PC-3 (cell line): ENCODE measurements at regions of chr1 and their contacts with region 1.

Region 1: GRCh38 chr1:222465211-222466041 is 82.5 kb downstream of the HHIPL2 start:
- DNase-seq: peak; percentile 100
- ATAC-seq: peak; percentile 99
- H3K4me3 ChIP-seq: peak overlapping the region; percentile 70
- H3K27ac ChIP-seq: peak overlapping the region; percentile 83
- H3K4me1 ChIP-seq: peaks cover 7% of the 10 kb centered on the region; the same call in 1 of the 2 replicates
- H3K27me3 ChIP-seq: no peaks in the 10 kb centered on the region
- CTCF ChIP-seq: peak; percentile 100

Region 2: GRCh38 chr1:222171005-222171404 is 294.4 kb before region 1 on chr1:
- CTCF ChIA-PET with region 1: interaction called, 10 read pairs
- POLR2A ChIA-PET with region 1: no interaction called
- intact Hi-C with region 1: no loop called
- DNase-seq: peak; percentile 77
- ATAC-seq: peak; percentile 71
- H3K4me3 ChIP-seq: no peak overlapping the region
- H3K27ac ChIP-seq: no peak overlapping the region
- H3K4me1 ChIP-seq: no peaks in the 10 kb centered on the region
- H3K27me3 ChIP-seq: no peaks in the 10 kb centered on the region
- CTCF ChIP-seq: peak; percentile 90

Region 3: DNA sequence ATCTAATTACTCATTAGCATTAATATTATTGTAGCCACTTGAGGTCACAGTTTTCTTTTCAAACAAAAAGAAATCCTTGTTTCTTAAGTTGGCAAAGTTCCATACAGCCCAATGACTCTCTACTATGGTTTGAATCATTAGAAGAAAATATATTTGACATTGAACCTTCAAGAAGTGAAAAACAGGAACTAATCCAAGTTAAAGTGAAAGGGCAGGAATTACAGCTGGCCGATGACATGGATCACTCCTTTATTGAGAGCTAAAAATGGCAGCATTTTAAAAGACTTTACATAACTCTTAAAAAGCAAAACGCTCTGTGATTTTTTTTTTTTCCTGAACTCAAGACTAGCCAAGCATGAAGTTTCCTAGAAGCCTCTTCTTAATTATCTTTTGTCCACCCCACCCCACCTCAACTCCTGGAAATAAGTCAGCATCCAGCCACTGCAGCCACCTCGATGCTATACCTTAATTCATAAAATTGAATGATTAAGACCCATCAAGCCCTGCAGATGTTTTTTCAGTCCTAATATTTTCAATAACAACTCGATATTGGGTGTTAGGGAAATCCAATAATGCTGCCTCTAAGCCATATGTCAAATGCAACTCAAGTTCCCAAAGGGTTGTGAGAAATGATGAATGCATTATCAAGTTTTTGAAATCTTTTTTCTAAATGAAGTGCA is 240.7 kb before region 1 on chr1:
- CTCF ChIA-PET with region 1: no interaction called
- POLR2A ChIA-PET with region 1: no interaction called
- intact Hi-C with region 1: no loop called
- DNase-seq: peak; percentile 21
- ATAC-seq: no peak
- H3K4me3 ChIP-seq: no peak overlapping the region
- H3K27ac ChIP-seq: no peak overlapping the region
- H3K4me1 ChIP-seq: peaks cover 14% of the 10 kb centered on the region
- H3K27me3 ChIP-seq: 0 out of 2 replicates have a peak, but pooled peaks cover under 1% of the 10 kb centered on the region
- CTCF ChIP-seq: no peak

Region 4: DNA sequence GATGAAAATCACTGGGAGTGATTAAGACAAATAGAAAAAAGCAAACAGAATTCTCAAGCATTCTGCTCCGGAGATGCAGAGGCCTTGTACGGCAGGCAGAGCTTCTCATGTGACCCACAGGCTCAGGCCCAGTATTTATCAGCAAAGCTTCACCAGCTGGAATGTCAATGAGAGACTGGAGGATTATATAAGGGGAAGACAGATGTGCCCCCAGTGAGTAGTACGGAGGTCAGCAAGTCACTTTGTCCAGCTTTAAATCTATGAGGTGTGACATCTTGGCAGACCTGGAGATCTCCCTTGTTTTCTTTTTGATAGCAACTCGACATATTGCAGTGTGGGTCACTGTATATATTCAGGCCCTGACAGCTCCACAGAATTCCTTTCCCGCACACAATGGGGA is 24.4 kb before region 1 on chr1:
- CTCF ChIA-PET with region 1: no interaction called
- POLR2A ChIA-PET with region 1: no interaction called
- intact Hi-C with region 1: no loop called
- DNase-seq: no peak
- ATAC-seq: no peak
- H3K4me3 ChIP-seq: no peak overlapping the region
- H3K27ac ChIP-seq: no peak overlapping the region
- H3K4me1 ChIP-seq: no peaks in the 10 kb centered on the region
- H3K27me3 ChIP-seq: peaks cover 36% of the 10 kb centered on the region
- CTCF ChIP-seq: no peak

Region 5: GRCh38 chr1:222579316-222579715 is 113.9 kb after region 1 on chr1:
- CTCF ChIA-PET with region 1: no interaction called
- POLR2A ChIA-PET with region 1: no interaction called
- intact Hi-C with region 1: no loop called
- DNase-seq: no peak
- ATAC-seq: no peak
- H3K4me3 ChIP-seq: no peak overlapping the region
- H3K27ac ChIP-seq: no peak overlapping the region
- H3K4me1 ChIP-seq: peaks cover 23% of the 10 kb centered on the region
- H3K27me3 ChIP-seq: no peaks in the 10 kb centered on the region
- CTCF ChIP-seq: no peak

Region 6: DNA sequence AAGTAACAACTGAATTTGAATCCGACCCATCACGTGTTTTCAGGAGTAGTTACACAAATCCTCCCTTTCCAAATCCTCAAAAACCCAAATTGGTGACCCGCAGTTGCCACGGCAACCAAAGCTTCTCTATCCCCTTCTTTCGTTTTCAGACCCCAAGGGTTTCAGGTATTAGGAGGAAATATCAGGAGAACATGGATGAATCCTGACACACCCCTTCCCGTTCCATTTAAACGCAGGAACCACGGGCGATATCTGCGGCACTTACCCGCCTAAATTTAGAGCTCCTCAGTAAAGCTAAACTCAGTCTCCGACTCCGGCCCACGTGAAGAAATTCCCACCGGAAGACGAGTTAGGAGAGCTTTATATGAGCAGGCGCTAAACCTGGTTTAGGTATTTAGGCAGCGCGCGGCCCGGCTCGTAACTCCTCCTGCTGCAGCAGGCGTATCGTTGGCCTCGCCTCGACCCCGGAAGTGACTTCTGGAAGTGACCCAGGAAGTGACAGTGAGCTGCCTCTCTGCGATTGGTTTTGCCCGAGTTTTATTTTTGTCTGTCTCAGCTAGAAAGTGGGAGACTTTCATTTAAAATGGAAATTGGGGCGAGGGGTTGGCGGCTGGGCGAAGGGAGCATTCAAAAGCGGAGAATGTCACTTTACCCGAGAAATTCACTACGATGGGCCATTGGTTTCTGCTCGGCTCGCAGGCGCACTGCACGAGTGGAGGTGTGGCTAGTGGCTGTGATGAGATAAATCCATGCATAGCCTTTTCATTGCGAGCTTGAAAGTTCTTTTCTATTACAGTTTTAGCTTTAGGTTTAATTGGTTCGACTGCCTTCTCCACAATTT is 124.3 kb after region 1 on chr1 and contains the start of gene TAF1A:
- CTCF ChIA-PET with region 1: interaction called, 3 read pairs
- POLR2A ChIA-PET with region 1: no interaction called
- intact Hi-C with region 1: loop called (anchors 2 kb)
- DNase-seq: peak; percentile 98
- ATAC-seq: peak; percentile 91
- H3K4me3 ChIP-seq: peak within 1 kb of the TSS; percentile 78
- H3K27ac ChIP-seq: peak within 1 kb of the TSS; percentile 41
- H3K4me1 ChIP-seq: peaks cover 36% of the 10 kb centered on the region
- H3K27me3 ChIP-seq: no peaks in the 10 kb centered on the region
- CTCF ChIP-seq: no peak
- total RNA-seq, gene TAF1A: 27.9 and 29.4 TPM in 2 replicates

Region 7: GRCh38 chr1:222617367-222617951 is 152.0 kb after region 1 on chr1:
- CTCF ChIA-PET with region 1: interaction called, 3 read pairs
- POLR2A ChIA-PET with region 1: no interaction called
- intact Hi-C with region 1: loop called (anchors 1 kb)
- DNase-seq: peak; percentile 90
- ATAC-seq: peak; percentile 86
- H3K4me3 ChIP-seq: peak overlapping the region; percentile 61
- H3K27ac ChIP-seq: no peak overlapping the region
- H3K4me1 ChIP-seq: peaks cover 13% of the 10 kb centered on the region
- H3K27me3 ChIP-seq: no peaks in the 10 kb centered on the region
- CTCF ChIP-seq: no peak

Region 8: DNA sequence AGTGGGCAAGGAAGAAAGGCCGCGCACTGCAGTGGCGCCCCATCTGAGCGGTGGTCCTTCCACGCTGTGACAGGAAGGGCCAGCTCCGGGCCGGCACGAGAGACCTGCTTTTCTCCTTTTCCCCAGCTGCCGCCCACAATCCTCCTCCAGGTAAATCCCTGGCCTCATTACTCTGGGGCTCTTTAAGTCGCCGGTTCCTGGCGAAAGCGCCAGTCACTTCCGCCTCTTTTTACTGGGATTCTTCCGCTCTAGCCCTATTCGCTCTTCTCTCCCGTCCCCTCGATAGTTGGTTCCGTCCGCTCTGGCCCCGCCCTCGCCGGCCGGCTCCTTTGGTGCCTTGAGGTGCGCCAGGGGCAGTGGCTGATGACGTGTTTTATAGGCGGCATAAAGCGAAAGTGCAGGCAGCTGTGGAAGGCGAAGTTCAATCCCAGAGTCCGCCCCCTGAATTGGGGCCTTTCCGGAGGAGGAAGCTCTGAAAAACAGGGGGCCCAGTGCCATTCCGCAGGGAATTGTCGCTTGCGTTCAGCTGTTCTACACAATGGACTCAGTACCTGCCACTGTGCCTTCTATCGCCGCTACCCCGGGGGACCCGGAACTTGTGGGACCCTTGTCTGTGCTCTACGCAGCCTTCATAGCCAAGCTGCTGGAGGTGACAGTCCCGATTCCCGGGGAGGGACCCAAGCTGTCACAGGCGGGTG is 178.7 kb after region 1 on chr1:
- CTCF ChIA-PET with region 1: no interaction called
- POLR2A ChIA-PET with region 1: no interaction called
- intact Hi-C with region 1: loop called (anchors 1 kb)
- DNase-seq: peak; percentile 100
- ATAC-seq: peak; percentile 93
- H3K4me3 ChIP-seq: peak overlapping the region; percentile 89
- H3K27ac ChIP-seq: peak overlapping the region; percentile 77
- H3K4me1 ChIP-seq: peaks cover 32% of the 10 kb centered on the region
- H3K27me3 ChIP-seq: no peaks in the 10 kb centered on the region
- CTCF ChIP-seq: no peak

Region 9: GRCh38 chr1:222792744-222793143 is 327.3 kb after region 1 on chr1:
- CTCF ChIA-PET with region 1: no interaction called
- POLR2A ChIA-PET with region 1: no interaction called
- intact Hi-C with region 1: loop called (anchors 2 kb)
- DNase-seq: peak; percentile 74
- ATAC-seq: peak; percentile 38; the same call in 1 of the 2 replicates
- H3K4me3 ChIP-seq: no peak overlapping the region
- H3K27ac ChIP-seq: no peak overlapping the region
- H3K4me1 ChIP-seq: no peaks in the 10 kb centered on the region
- H3K27me3 ChIP-seq: no peaks in the 10 kb centered on the region
- CTCF ChIP-seq: peak; percentile 95